Activated naive CD4-positive, alpha-beta T cell treated with anti-CD3 and anti-CD28 coated beads for 36 hours (primary cell): ENCODE measurements at regions of chr12 and their contacts with region 1.

Region 1: DNA sequence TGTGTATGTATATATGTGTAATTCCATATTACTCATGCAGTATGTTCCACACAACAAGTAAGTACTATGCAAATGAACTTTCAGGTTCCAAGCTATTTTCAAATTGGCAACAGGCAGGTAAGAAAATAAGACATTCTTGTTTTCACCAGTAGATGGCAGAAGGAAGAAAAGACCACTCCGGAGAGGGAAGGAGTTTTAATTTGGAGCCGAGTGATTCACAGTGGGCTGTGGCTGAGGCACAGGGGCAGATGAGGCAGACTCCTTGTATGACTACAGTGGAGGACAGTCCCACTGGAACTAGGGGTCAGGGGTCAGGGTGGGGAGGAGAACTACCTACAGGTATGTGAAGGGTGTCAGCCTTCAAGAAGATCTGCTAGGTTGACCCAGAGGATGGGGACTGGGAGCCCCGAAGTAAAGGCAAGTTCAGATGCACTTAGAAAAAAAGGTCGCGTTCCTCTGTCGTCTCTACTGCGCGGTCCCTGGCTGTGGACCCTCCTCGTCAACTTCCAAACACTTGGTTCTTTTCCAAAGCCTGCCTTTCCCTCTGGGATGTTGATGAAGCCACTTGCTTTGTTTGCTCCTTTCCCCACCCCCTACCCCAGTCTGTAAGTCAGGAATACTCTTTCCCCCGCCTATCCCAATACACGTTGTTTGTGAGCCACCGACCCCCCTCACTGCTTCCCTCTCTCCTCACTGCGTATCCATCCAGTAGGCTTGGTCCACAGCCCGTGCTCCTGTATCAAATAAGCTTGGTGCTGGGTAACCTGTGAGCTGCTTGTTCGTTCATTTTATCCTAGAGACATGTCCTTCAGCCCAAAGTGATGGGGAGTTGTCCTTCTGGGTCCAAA is 24.1 kb downstream of the DDX47 start:
- DNase-seq: peak; percentile 78
- H3K4me3 Mint-ChIP-seq: no peak overlapping the region
- H3K27ac Mint-ChIP-seq: peak overlapping the region; percentile 54
- H3K4me1 Mint-ChIP-seq: peaks cover 52% of the 10 kb centered on the region
- H3K27me3 Mint-ChIP-seq: no peaks in the 10 kb centered on the region

Region 2: DNA sequence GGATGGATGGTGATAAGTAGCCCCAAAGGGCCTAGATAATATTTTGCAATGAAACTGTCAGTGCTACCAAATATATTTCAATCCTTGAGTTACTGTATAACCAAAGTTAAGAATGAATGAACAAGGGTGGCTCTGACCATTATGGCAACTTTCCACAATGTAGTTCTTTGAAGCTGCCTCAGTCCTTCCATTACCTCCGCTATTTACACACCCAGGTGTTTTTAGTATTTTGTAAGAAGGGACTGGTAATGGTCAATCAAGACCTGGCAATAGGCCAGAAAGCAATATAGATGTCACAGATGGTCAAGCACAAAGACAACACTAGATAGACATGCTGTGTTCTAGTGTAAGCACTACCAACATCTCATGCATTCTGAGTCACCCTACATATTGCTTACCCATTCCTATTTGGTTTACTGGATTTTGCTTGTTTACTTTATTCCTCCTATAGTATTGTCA is 290.9 kb before region 1 on chr12:
- CTCF ChIA-PET with region 1: no interaction called
- intact Hi-C with region 1: no loop called
- DNase-seq: no peak
- H3K4me3 Mint-ChIP-seq: no peak overlapping the region
- H3K27ac Mint-ChIP-seq: no peak overlapping the region
- H3K4me1 Mint-ChIP-seq: peaks cover 30% of the 10 kb centered on the region
- H3K27me3 Mint-ChIP-seq: no peaks in the 10 kb centered on the region

Region 3: GRCh38 chr12:12803186-12803585 is 34.1 kb before region 1 on chr12:
- CTCF ChIA-PET with region 1: no interaction called
- intact Hi-C with region 1: loop called (anchors 1 kb)
- DNase-seq: peak; percentile 61
- H3K4me3 Mint-ChIP-seq: no peak overlapping the region
- H3K27ac Mint-ChIP-seq: no peak overlapping the region
- H3K4me1 Mint-ChIP-seq: peaks cover 53% of the 10 kb centered on the region
- H3K27me3 Mint-ChIP-seq: no peaks in the 10 kb centered on the region

Region 4: DNA sequence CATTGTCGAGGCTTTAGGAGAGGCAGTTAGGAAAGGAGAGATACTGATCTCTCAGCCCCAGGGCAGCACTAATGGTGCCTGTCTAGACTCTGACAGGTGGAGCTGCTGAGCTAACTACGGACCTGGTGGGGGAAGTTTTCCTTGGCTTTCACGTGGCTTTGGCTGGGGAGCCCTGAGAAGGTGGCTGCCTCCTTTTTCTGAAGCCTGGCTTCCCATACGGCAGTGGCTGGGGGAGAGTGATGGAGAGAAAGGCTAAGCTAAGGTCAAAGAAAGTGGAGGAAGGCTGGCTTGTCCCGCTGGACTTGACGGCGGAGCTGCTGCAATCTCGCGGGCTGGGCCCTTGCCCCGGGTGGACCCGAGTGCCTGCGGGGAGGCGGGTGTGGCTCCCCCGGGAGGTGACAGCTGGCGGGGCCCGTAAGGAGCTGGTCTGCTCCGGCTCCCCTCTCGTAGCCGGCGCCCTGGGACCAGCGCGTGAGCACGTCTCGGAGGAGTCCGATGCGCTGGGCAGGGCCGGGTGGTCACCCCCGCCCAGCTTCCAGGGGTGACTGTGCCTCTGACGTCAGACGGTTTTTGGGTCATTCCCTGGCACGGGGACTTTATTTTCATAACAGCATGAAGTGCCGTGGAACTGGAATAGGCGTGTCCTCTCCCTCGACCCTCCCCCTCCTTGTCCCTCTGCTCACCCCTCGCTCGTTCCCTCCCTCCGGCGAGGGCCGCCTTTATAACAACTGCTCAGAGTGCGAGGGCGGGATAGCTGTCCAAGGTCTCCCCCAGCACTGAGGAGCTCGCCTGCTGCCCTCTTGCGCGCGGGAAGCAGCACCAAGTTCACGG is 53.8 kb after region 1 on chr12 and contains the start of gene GPRC5A:
- CTCF ChIA-PET with region 1: interaction called, 10 read pairs
- intact Hi-C with region 1: loop called (anchors 1 kb)
- DNase-seq: peak; percentile 68
- H3K4me3 Mint-ChIP-seq: peak within 1 kb of the TSS; percentile 82
- H3K27ac Mint-ChIP-seq: no peak within 1 kb of the TSS
- H3K4me1 Mint-ChIP-seq: peaks cover 16% of the 10 kb centered on the region
- H3K27me3 Mint-ChIP-seq: peaks cover 14% of the 10 kb centered on the region
- total RNA-seq, gene GPRC5A: 0.24 to 0.64 TPM

Region 5: DNA sequence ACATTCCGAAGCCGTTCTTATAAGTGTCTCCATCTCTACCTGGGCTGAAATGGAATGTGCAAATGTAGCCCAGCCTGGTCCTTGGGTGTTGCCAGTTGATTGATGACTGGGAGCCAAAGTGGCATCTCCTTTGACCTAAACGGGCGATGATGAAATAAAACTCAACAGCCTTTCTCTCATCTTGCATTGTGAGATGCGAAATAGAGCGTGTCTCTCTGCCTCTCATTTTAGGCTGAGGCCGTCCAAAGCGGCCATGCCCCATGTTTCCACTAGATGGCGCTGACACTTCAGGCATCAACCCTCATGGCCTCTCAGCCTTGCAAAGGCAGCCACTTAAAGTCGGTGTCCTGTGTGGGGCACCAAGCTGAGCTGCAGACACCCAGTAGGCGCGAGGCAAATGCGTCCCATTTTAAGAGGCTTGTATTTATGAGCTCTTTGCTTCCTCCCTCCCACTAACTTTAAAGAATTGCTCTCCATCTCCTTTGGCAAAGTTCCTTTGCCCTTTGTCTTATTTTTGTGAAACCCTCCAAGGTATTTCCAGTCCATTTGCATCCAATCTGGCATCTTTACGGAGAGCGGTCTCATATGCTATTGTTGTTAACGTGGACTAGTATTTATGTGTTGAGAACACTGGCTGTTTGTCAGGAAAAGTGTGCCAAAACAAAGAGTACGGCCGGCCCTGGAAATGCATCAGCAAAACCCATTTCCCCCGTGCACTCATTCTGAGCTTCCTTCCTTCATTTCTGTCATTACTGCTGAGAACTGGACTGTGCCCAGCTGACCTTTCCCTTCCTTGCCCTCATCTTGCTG is 79.1 kb after region 1 on chr12:
- CTCF ChIA-PET with region 1: interaction called, 10 read pairs
- intact Hi-C with region 1: loop called (anchors 1 kb)
- DNase-seq: peak; percentile 94
- H3K4me3 Mint-ChIP-seq: no peak overlapping the region
- H3K27ac Mint-ChIP-seq: no peak overlapping the region
- H3K4me1 Mint-ChIP-seq: peaks cover 7% of the 10 kb centered on the region
- H3K27me3 Mint-ChIP-seq: peaks cover 6% of the 10 kb centered on the region

Region 6: GRCh38 chr12:12999959-13000615 is 162.8 kb after region 1 on chr12 and contains the start of gene HEBP1:
- CTCF ChIA-PET with region 1: no interaction called
- intact Hi-C with region 1: loop called (anchors 1 kb)
- DNase-seq: peak; percentile 97
- H3K4me3 Mint-ChIP-seq: peak within 1 kb of the TSS; percentile 77
- H3K27ac Mint-ChIP-seq: peak within 1 kb of the TSS; percentile 31
- H3K4me1 Mint-ChIP-seq: peaks cover 26% of the 10 kb centered on the region
- H3K27me3 Mint-ChIP-seq: peaks cover 6% of the 10 kb centered on the region
- total RNA-seq, gene HEBP1: 28.7 to 32.3 TPM

Region 7: GRCh38 chr12:13196130-13196921 is 359.1 kb after region 1 on chr12 and contains the start of gene EMP1:
- CTCF ChIA-PET with region 1: interaction called, 3 read pairs
- intact Hi-C with region 1: loop called (anchors 1 kb)
- DNase-seq: peak; percentile 93
- H3K4me3 Mint-ChIP-seq: peak within 1 kb of the TSS; percentile 72
- H3K27ac Mint-ChIP-seq: peak within 1 kb of the TSS; percentile 38
- H3K4me1 Mint-ChIP-seq: peaks cover 20% of the 10 kb centered on the region
- H3K27me3 Mint-ChIP-seq: peaks cover 4% of the 10 kb centered on the region
- total RNA-seq, gene EMP1: 3.0 to 4.0 TPM